A673 (cell line): ENCODE measurements at regions of chr14 and their contacts with region 1.

Region 1: DNA sequence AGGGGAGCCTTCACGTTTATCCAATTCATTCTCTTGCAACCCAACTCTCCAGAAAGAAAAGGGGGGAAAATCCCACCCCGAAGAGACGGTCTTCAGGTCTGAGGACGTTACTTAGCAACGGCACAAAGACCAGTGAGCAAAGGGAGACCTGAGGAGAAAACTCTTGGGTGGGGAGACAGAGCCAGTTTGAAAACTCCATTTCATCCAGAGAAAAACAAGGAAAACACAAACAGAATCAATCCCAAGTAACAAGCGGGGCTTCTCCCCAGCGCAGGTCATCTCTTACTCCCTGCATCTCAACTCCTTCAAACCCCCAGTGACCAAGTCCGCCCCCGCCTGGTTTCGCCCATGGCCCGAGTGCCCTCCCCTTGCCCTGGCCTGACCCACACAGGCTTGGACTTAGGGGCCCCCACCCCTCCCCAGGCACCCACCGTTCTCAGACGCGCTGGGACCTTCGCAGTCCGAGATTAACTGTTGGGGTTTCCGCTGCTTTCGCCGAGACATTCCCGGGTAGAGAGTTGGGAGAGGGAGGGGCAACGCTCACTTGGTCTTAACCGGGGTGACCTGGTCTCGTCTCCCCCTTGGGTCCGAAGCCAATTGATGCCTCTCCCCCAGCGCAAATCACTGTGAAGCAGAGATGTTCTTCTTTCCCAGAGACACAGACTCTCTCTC is 10.4 kb upstream of the SALL2 start:
- DNase-seq: no peak
- H3K4me3 ChIP-seq: peak overlapping the region; percentile 85
- H3K27ac ChIP-seq: peak overlapping the region; percentile 99
- H3K4me1 ChIP-seq: peaks cover 52% of the 10 kb centered on the region
- H3K27me3 ChIP-seq: no peaks in the 10 kb centered on the region
- CTCF ChIP-seq: no peak

Region 2: GRCh38 chr14:20857630-20858261 is 678.8 kb before region 1 on chr14:
- CTCF ChIA-PET with region 1: no interaction called
- POLR2A ChIA-PET with region 1: no interaction called
- intact Hi-C with region 1: no loop called
- DNase-seq: peak; percentile 67
- H3K4me3 ChIP-seq: no peak overlapping the region
- H3K27ac ChIP-seq: no peak overlapping the region
- H3K4me1 ChIP-seq: no peaks in the 10 kb centered on the region
- H3K27me3 ChIP-seq: peaks cover 24% of the 10 kb centered on the region
- CTCF ChIP-seq: peak; percentile 92

Region 3: GRCh38 chr14:21269252-21270046 is 267.1 kb before region 1 on chr14 and contains the start of gene HNRNPC:
- CTCF ChIA-PET with region 1: no interaction called
- POLR2A ChIA-PET with region 1: no interaction called
- intact Hi-C with region 1: loop called (anchors 10 kb)
- DNase-seq: peak; percentile 100
- H3K4me3 ChIP-seq: peak within 1 kb of the TSS; percentile 68
- H3K27ac ChIP-seq: peak within 1 kb of the TSS; percentile 91
- H3K4me1 ChIP-seq: peaks cover 24% of the 10 kb centered on the region
- H3K27me3 ChIP-seq: no peaks in the 10 kb centered on the region
- CTCF ChIP-seq: no peak
- total RNA-seq, gene HNRNPC: 934 and 949 TPM in 2 replicates

Region 4: DNA sequence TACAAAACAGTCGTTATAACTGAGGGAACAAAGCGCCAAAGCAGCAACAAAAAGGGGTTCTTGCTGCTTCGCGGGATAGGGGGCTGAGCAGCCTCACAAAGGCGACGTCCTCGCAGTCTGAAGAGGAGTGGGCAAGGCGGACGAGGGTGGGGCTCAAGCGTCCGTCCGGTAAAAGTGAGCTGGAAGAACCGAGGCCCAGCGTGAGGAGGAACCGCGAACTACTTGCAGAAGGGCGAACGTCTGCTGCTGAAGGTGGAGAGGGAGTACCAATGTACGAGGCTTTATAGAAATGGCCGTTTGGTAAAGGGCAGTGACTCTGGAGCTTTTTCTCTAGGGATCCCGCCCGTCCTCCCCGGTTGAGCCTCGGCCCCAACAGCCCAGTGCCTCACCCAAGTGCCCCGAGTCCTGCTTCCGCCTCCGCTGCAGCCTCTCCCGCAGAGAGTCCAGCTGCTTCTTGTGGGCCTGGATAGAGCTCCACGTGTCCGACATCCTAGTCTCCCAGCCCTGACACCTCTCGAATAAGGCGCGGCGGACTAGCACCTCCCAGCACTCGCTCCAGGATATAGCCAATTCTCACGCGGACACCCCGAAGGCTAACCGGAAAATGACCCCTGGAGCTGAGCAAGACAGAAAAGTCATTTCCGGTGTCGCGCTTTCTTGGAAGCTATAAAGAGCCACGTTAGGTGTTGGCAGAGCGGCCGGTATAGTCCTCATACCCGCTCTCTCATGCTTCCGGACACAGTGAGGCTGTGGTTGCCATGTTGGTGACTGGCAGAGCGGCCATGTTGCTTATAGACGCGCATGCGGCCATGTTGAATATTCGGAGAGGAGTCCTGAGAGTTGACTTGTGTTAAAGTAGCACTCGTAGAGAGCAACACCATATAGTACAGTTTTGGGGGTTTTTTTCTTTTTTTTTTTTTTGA is 25.6 kb before region 1 on chr14 and contains the start of gene METTL3:
- CTCF ChIA-PET with region 1: no interaction called
- POLR2A ChIA-PET with region 1: interaction called, 22 read pairs
- intact Hi-C with region 1: no loop called
- DNase-seq: peak; percentile 99
- H3K4me3 ChIP-seq: peak within 1 kb of the TSS; percentile 88
- H3K27ac ChIP-seq: peak within 1 kb of the TSS; percentile 85
- H3K4me1 ChIP-seq: peaks cover 4% of the 10 kb centered on the region
- H3K27me3 ChIP-seq: no peaks in the 10 kb centered on the region
- CTCF ChIP-seq: no peak
- total RNA-seq, gene METTL3: 93.0 and 96.3 TPM in 2 replicates

Region 5: DNA sequence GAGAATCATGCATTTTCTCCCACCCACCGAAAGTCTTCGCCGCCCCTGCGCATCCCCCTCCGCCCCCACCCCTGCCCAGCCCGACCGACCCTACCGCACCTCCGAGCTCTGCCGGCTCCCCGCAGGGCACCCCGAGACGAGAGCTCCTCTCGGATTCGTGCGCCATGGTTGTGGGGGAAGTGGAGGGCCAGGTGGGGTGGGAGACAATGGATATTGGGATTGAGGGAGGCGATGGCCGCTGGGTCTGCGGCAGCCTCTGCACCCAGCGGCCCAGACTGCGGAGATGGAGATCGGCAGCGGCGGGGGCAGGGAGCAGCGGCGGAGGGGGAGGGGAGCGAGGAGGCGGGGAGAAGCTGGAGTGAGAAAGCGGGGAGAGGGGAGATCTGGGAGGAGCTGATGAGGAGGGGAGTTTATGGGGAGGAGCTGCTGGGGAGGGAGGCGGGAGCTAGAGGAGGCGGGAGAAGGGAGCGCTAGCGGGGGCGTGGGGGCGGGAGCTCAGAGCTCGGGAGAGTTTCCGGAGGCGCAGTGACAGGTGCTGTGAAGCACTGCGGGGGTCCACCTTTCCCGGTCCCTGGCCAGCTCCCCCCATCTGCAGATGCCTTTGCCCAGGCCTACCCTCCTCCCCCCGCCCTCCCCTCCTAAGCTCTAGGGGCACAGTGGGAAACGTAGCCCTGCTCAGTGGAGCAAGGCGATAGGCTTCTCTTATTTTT is 10.4 kb before region 1 on chr14 and contains the start of gene SALL2:
- CTCF ChIA-PET with region 1: interaction called, 4 read pairs
- POLR2A ChIA-PET with region 1: interaction called, 7 read pairs
- intact Hi-C with region 1: loop called (anchors 1 kb)
- DNase-seq: peak; percentile 94
- H3K4me3 ChIP-seq: peak within 1 kb of the TSS; percentile 92
- H3K27ac ChIP-seq: peak within 1 kb of the TSS; percentile 85
- H3K4me1 ChIP-seq: peaks cover 55% of the 10 kb centered on the region
- H3K27me3 ChIP-seq: no peaks in the 10 kb centered on the region
- CTCF ChIP-seq: no peak
- total RNA-seq, gene SALL2: 149 and 157 TPM in 2 replicates

Region 6: GRCh38 chr14:21656980-21657379 is 120.4 kb after region 1 on chr14:
- CTCF ChIA-PET with region 1: no interaction called
- POLR2A ChIA-PET with region 1: interaction called, 22 read pairs
- intact Hi-C with region 1: loop called (anchors 1 kb)
- DNase-seq: peak; percentile 98
- H3K4me3 ChIP-seq: no peak overlapping the region
- H3K27ac ChIP-seq: peak overlapping the region; percentile 100
- H3K4me1 ChIP-seq: peaks cover 84% of the 10 kb centered on the region
- H3K27me3 ChIP-seq: no peaks in the 10 kb centered on the region
- CTCF ChIP-seq: no peak